ENCODE measurements at regions of chrX and their contacts with region 1.

Region 1: DNA sequence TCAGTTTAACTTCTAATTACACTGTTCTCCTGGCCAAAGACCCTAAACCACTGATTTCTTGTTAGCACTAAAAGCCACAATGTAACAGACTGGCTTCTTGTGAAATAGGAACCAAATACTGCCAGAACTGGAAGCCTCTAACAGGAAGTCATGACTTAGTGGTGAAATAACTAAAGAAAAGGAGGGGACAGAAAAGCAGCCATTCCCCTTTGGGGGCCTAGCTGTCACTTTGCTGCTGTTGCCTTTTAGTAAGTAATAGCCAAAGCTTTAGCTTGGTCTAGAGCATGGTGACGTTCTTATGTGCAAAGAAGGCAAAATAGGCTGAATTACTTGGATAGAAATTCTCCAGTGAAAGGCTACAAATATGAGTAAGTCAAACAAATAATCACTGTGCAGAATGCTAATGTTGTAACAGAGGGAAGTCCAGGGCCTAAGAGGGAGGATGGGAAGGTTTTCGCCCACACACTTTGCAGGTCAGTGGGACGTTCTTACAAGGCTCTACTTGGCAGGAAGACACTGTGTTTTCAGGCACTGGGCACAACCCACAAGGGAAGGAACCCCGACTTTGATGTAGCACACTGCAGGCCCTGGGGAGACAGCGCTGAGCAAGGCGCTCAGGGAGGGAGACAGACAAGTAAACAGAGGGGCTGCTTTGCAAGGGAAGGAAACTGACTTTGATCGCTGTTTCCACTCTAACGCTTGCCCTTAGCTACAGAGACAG is 16.7 kb downstream of the GAB3 start:
- DNase-seq: peak; percentile 11
- H3K4me3 Mint-ChIP-seq: peak overlapping the region; percentile 64
- H3K27ac Mint-ChIP-seq: peak overlapping the region; percentile 85
- H3K4me1 Mint-ChIP-seq: peaks cover 86% of the 10 kb centered on the region
- H3K27me3 Mint-ChIP-seq: no peaks in the 10 kb centered on the region

Region 2: DNA sequence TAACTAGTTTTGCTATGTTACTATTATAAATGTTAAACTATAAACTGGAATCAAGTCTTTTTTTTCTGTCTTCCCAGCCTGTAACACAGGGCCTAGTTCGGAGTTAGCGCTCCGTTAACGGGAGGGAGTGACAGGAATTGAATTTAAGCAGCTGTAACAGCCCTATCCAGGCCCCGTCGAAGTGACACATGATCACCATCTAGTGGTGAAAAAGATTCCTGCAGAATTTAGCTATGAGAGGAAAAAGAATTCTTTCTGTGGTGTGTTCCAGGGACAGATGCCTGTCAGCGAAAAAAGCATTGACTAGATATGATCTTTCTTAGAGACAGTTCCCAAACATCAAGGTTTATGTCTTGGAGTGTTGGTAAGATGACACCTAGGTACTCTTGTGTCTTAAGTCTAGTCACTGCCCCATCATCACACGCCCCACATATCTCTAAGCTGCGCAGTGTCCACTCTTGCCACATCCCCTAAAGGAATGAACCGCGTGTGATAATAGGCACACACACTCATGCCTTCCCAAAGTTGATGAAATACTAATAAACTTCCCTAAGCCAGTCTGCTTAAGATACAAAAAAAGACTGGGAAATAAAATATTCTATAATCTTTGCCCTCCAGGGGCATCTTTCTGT is 14.6 kb after region 1 on chrX:
- intact Hi-C with region 1: loop called (anchors 2 kb)
- DNase-seq: peak; percentile 31
- H3K4me3 Mint-ChIP-seq: peak overlapping the region; percentile 26
- H3K27ac Mint-ChIP-seq: no peak overlapping the region
- H3K4me1 Mint-ChIP-seq: peaks cover 25% of the 10 kb centered on the region
- H3K27me3 Mint-ChIP-seq: peaks cover 5% of the 10 kb centered on the region

Measured in activated T-helper 2 cell treated with anti-CD3 and anti-CD28 coated beads, Interferon-gamma antibody, Interleukin-2, Interleukin-4, amounts not matched to agents 10 μg/mL and 5 μg/mL and 100 μg/mL, durations not matched to agents 14 hours and 24 hours and 36 hours (primary cell).